ENCODE measurements at regions of chr11 and their contacts with region 1.

Region 1: GRCh38 chr11:118689851-118690552 is 10.6 kb upstream of the TREH start:
- H3K4me3 ChIP-seq: peak overlapping the region; percentile 49
- H3K27ac ChIP-seq: no peak overlapping the region; the same call in 1 of the 2 replicates
- H3K4me1 ChIP-seq: no peaks in the 10 kb centered on the region
- CTCF ChIP-seq: peak; percentile 97

Region 2: GRCh38 chr11:118592616-118593367 is 97.2 kb before region 1 on chr11:
- CTCF ChIA-PET with region 1: interaction called, 14 read pairs
- POLR2A ChIA-PET with region 1: no interaction called
- H3K4me3 ChIP-seq: no peak overlapping the region
- H3K27ac ChIP-seq: no peak overlapping the region
- H3K4me1 ChIP-seq: no peaks in the 10 kb centered on the region
- CTCF ChIP-seq: no peak

Region 3: GRCh38 chr11:118659314-118659952 is 30.6 kb before region 1 on chr11:
- CTCF ChIA-PET with region 1: interaction called, 22 read pairs
- POLR2A ChIA-PET with region 1: interaction called, 3 read pairs
- H3K4me3 ChIP-seq: no peak overlapping the region
- H3K27ac ChIP-seq: no peak overlapping the region
- H3K4me1 ChIP-seq: no peaks in the 10 kb centered on the region
- CTCF ChIP-seq: peak; percentile 82

Region 4: DNA sequence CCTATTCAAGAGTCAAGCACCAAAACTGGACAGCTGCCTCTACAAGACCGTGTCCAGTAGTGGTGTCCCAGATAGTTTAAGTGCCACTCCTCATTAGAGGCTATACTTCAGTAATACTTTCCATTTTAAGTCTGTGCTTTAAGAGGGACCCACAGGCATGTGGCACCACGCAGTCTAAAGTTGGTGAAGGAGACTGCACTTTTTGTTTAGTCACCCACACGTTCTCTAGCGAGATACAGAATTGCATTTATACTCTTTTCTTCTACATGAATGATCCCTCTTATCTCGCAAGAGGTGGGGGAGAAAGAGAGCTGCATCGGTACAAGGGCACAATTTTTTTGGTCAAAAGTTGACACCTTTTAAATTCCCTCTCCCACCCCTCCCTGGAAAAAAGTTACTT is 59.4 kb after region 1 on chr11:
- CTCF ChIA-PET with region 1: interaction called, 11 read pairs
- POLR2A ChIA-PET with region 1: no interaction called
- H3K4me3 ChIP-seq: no peak overlapping the region
- H3K27ac ChIP-seq: no peak overlapping the region
- H3K4me1 ChIP-seq: no peaks in the 10 kb centered on the region
- CTCF ChIP-seq: no peak

Region 5: GRCh38 chr11:118791111-118791965 is 101.3 kb after region 1 on chr11 and contains the start of gene DDX6:
- CTCF ChIA-PET with region 1: interaction called, 8 read pairs
- POLR2A ChIA-PET with region 1: interaction called, 15 read pairs
- H3K4me3 ChIP-seq: peak within 1 kb of the TSS; percentile 97
- H3K27ac ChIP-seq: peak within 1 kb of the TSS; percentile 97
- H3K4me1 ChIP-seq: 0 out of 2 replicates have a peak, but pooled peaks cover 4% of the 10 kb centered on the region
- CTCF ChIP-seq: peak; percentile 91

Region 6: DNA sequence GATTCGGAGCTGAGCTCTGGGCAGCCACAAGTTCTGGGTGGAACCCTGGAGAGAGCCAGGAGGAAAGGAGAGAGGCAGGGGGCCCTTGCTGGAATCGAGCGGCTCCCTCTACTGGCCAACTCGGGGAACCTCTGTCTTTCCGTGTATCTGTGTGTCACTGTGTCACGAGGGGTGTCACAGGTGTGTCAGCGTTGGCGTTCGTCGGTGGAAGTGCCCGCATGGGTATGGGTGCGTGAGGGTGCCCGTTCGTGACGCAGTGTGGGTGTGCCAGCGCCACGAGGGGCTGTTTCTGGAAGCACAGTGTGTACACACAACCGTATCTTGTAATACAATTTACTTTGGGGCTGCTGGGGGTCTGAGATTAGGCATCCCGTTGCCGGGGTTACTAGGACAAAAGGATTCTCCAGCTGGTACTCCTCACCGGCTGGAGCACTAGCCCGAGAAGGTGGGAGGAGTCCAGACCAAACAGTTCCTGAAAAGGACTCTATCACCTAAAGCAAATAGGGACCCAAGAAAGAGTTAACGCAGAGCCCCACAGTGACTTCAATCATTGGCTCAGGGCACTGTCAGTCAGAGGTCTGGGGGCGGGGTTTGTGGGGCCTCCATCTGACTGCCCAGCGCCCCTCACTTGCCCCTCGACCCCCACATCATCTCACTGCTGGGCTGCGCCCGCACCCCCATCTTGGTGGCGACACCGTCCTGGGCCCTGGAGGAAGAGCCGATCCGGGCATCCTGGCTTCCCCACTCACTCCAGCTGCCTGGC is 238.3 kb after region 1 on chr11:
- CTCF ChIA-PET with region 1: interaction called, 12 read pairs
- POLR2A ChIA-PET with region 1: no interaction called
- H3K4me3 ChIP-seq: peak overlapping the region; percentile 48
- H3K27ac ChIP-seq: peak overlapping the region; percentile 64
- H3K4me1 ChIP-seq: peaks cover 3% of the 10 kb centered on the region; the same call in 1 of the 2 replicates
- CTCF ChIP-seq: peak; percentile 93

Measured in HEK293 (cell line).